ENCODE measurements at regions of chr4 and their contacts with region 1.

Region 1: DNA sequence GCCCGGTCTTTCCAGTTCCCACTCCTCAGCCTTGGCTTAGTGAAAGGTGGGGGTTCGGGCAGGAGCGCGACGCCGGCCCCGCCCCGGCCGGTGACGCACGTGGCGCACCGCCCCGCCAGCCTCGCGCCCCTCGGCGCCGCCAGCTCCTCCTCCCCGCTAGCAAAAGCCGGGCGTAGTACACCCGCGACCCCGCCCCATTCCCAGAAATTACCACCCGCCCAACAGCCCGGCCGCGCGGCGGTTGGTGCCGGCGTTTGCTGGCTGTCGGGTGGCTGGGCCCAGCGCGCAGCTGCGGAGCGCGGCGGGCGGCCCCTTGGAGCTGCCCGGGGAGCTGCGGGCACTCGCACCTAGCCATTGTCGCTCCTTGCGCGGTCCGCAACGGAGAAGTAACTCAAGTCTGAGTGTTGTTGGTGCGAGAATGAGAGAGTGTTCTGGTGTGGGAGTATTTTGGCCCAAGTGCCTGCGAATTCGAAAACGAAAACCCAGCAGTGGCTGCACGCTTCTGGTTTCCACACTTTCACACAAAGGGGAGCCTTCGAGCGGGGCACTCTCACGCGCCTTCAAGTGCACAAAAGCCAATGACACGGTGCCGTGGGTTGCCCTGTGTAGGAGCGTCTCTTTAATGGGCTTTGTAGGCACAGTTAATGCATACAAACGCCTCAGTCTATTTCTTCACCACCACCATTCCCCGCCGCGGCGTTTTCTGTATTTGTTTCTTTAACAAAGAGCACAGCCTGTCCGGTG is 1.0 kb upstream of the ELF2 start:
- DNase-seq: peak; percentile 96 to 98 (median 97)
- ATAC-seq: peak; percentile 82 to 89 (median 84)
- H3K4me3 ChIP-seq: peak overlapping the region; percentile 76 to 100 (median 98)
- H3K27ac ChIP-seq: peak overlapping the region; percentile 90 to 100 (median 100)
- H3K4me1 ChIP-seq: peaks cover 0 to 26% (median 14%) of the 10 kb centered on the region in 12 donors
- H3K27me3 ChIP-seq: no peaks in the 10 kb centered on the region
- CTCF ChIP-seq: peak in 2 of 12 donors; percentile 3 to 9
- POLR2A ChIP-seq: peak in 1 of 2 donors; percentile 90

Region 2: GRCh38 chr4:138835832-138836533 is 342.1 kb before region 1 on chr4:
- intact Hi-C with region 1: no loop called
- DNase-seq: peak; percentile 60 to 89 (median 67)
- ATAC-seq: peak; percentile 77 to 95 (median 86)
- H3K4me3 ChIP-seq: no peak overlapping the region
- H3K27ac ChIP-seq: no peak overlapping the region
- H3K4me1 ChIP-seq: peaks cover 0 to 13% (median 0%) of the 10 kb centered on the region in 12 donors
- H3K27me3 ChIP-seq: no peaks in the 10 kb centered on the region
- CTCF ChIP-seq: peak in 3 of 12 donors; percentile 10 to 24 (median 11)
- POLR2A ChIP-seq: no peak

Region 3: GRCh38 chr4:138967313-138967712 is 210.7 kb before region 1 on chr4:
- intact Hi-C with region 1: no loop called
- DNase-seq: no peak
- ATAC-seq: no peak
- H3K4me3 ChIP-seq: no peak overlapping the region
- H3K27ac ChIP-seq: no peak overlapping the region
- H3K4me1 ChIP-seq: peaks cover 0 to 4% (median 0%) of the 10 kb centered on the region in 12 donors
- H3K27me3 ChIP-seq: no peaks in the 10 kb centered on the region
- CTCF ChIP-seq: no peak
- POLR2A ChIP-seq: no peak

Region 4: DNA sequence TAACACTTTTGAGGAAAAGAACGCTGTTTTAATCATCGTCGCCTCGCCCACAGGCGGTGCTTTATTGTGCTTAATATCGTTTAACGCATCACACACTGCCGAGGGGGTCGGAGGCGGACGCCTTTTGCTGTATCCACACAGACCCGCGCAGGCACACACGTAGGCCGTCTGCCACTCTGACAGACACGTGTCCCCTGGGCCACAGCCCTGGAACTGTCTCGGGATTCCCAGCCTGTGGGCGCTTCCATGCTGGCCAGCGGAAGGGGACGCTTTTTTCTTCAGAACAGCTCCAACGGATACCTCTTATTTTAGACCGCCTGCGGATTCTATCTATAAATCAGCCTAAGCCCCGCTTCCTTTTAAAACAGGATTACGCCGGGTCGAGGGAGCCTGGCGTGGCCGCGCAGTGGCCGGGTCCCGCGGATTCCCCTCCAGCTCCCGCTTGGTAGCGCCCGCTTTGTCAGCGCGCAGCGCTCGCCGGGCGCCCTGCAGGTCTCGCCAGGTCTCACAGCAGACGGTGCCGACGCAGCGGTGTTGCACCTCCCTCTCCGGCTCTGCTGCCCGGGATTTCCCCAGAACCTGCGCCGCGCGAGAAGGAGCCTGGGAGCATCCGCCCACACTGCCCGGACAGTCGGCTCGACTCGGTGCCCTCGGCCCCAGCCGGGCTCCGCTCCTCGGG is 162.6 kb before region 1 on chr4 and contains the start of gene NOCT:
- intact Hi-C with region 1: loop called in 2 of 10 experiments (anchors 5 kb)
- DNase-seq: peak; percentile 89 to 94 (median 92)
- ATAC-seq: peak; percentile 94 to 97 (median 96)
- H3K4me3 ChIP-seq: peak within 1 kb of the TSS; percentile 57 to 92 (median 74)
- H3K27ac ChIP-seq: peak within 1 kb of the TSS; percentile 81 to 98 (median 92)
- H3K4me1 ChIP-seq: peaks cover 0 to 62% (median 14%) of the 10 kb centered on the region in 12 donors
- H3K27me3 ChIP-seq: no peaks in the 10 kb centered on the region
- CTCF ChIP-seq: peak in 3 of 12 donors; percentile 4 to 33 (median 8)
- POLR2A ChIP-seq: peak; percentile 11 to 87
- total RNA-seq, gene NOCT: 6.1 to 16.8 (median 8.7) TPM

Region 5: GRCh38 chr4:139083956-139084803 is 93.9 kb before region 1 on chr4:
- intact Hi-C with region 1: loop called in 6 of 10 experiments (anchors 1 to 5 kb)
- DNase-seq: peak; percentile 89 to 95 (median 92)
- ATAC-seq: peak; percentile 57 to 89 (median 78)
- H3K4me3 ChIP-seq: peak overlapping the region; percentile 72 to 94 (median 82)
- H3K27ac ChIP-seq: peak overlapping the region; percentile 80 to 97 (median 94)
- H3K4me1 ChIP-seq: peaks cover 0 to 38% (median 29%) of the 10 kb centered on the region in 12 donors
- H3K27me3 ChIP-seq: no peaks in the 10 kb centered on the region
- CTCF ChIP-seq: peak in 10 of 12 donors; percentile 15 to 54 (median 39)
- POLR2A ChIP-seq: peak in 1 of 2 donors; percentile 30

Region 6: DNA sequence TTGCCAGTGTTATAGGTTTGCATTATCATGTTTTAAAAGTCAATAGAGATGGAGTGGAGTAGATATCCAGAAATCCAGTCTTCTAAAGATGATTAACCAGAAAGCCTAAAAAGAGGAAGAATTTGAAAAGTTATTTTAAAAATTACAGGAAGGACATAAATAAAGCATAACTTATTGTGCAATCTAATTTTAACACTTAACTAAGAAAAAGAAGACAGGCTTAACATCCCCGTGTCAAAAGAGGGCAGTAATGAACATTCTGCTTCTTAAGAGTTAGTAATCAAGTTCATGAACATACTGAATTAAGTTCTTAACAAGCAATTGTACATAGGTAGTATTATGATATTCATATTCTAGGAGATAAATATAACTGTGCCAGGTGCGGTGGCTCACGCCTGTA is 40.3 kb before region 1 on chr4:
- intact Hi-C with region 1: loop called in 1 of 10 experiments (anchors 5 kb)
- DNase-seq: no peak
- ATAC-seq: no peak
- H3K4me3 ChIP-seq: no peak overlapping the region
- H3K27ac ChIP-seq: no peak overlapping the region
- H3K4me1 ChIP-seq: peaks cover 0 to 29% (median 11%) of the 10 kb centered on the region in 12 donors
- H3K27me3 ChIP-seq: no peaks in the 10 kb centered on the region
- CTCF ChIP-seq: no peak
- POLR2A ChIP-seq: no peak

Region 7: DNA sequence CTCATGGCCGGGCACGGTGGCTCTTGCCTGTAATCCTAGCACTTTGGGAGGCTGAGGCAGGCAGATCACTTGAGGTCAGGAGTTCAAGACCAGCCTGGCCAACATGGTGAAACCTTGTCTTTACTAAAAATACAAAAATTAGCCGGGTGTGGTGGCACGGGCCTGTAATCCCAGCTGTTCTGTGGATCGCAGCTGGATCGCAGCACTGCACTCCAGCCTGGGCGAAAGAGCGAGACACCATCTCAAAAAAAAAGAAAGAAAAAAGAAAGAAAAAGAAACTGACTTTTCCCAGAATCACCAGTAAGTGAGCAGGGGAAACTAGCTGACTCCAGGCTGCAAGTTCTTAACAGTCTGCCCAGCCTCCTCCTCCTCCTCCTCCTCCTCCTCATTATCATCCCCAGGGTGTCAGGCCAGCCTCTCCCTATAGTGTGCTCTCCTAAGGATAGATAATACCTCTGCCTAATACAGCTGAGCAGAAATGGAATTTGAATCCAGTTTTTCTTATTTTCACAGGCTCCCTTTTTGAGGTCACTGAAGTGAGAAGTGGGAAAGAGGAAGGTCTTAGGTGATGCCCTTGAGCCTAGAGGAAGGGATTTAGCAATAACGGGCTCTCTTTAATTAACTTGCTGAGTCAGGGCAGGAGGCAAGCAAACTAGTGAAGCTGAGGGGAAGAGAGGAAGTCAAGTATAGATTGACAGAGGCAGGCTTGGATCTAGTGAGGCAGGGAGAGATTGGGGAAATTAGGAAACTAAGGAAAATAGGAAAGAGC is 10.8 kb after region 1 on chr4:
- intact Hi-C with region 1: no loop called
- DNase-seq: no peak
- ATAC-seq: peak in 3 of 4 donors; percentile 81 to 85 (median 84)
- H3K4me3 ChIP-seq: peak overlapping the region in 1 of 12 donors; percentile 17
- H3K27ac ChIP-seq: peak overlapping the region in 4 of 12 donors; percentile 19 to 90 (median 30)
- H3K4me1 ChIP-seq: peaks cover 0 to 18% (median 0%) of the 10 kb centered on the region in 12 donors
- H3K27me3 ChIP-seq: no peaks in the 10 kb centered on the region
- CTCF ChIP-seq: no peak
- POLR2A ChIP-seq: no peak

Region 8: DNA sequence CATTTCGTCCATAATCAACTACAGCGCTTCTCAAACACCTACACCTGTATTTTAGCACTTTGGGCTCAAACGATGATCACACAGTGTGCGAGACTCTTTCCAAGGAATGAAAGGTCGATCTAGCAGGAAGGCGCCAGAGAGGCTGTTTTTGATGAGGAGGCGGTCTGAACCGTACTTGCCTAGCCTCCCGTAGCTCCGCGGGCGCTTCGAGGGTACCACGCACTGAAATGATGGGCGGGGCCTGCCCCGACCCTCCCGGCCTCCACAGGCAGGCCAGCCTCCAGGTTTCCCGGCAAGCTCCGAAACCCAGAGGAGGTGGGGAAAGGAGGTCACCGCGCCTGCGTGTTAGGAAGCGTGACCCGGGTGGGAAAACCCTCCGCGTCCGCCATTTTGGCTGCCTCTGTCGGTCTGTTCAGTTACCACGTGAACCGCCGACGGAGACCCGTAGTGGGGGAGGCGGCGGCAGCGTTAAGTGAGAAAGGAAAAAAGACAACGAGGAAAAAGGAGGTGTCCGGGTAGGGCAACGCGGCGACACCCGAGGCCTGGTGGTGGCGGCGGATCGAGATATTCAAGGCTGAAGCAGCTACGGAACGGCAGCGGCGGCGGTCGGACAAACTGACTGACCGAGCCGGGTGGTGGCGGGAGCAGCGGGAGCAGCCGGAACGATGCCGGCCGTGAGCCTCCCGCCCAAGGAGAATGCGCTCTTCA is 123.2 kb after region 1 on chr4 and contains the start of gene NAA15:
- intact Hi-C with region 1: loop called in 8 of 10 experiments (anchors 2 to 5 kb)
- DNase-seq: peak; percentile 98 to 99 (median 98)
- ATAC-seq: peak; percentile 96 to 98 (median 97)
- H3K4me3 ChIP-seq: peak within 1 kb of the TSS; percentile 77 to 97 (median 93)
- H3K27ac ChIP-seq: peak within 1 kb of the TSS; percentile 81 to 97 (median 92)
- H3K4me1 ChIP-seq: peaks cover 2 to 53% (median 25%) of the 10 kb centered on the region in 12 donors
- H3K27me3 ChIP-seq: no peaks in the 10 kb centered on the region
- CTCF ChIP-seq: peak in 1 of 12 donors; percentile 8
- POLR2A ChIP-seq: peak in 1 of 2 donors; percentile 77
- total RNA-seq, gene NAA15: 18.6 to 50.8 (median 33.0) TPM

Region 9: GRCh38 chr4:139554893-139555704 is 377.1 kb after region 1 on chr4:
- intact Hi-C with region 1: loop called in 1 of 10 experiments (anchors 5 kb)
- DNase-seq: peak; percentile 93 to 95 (median 94)
- ATAC-seq: peak; percentile 79 to 85 (median 81)
- H3K4me3 ChIP-seq: peak overlapping the region; percentile 72 to 97 (median 93)
- H3K27ac ChIP-seq: peak overlapping the region; percentile 91 to 99 (median 97)
- H3K4me1 ChIP-seq: peaks cover 0 to 76% (median 53%) of the 10 kb centered on the region in 12 donors
- H3K27me3 ChIP-seq: no peaks in the 10 kb centered on the region
- CTCF ChIP-seq: no peak
- POLR2A ChIP-seq: peak in 1 of 2 donors; percentile 78